ENCODE measurements at regions of chr14 and their contacts with region 1.

Region 1: DNA sequence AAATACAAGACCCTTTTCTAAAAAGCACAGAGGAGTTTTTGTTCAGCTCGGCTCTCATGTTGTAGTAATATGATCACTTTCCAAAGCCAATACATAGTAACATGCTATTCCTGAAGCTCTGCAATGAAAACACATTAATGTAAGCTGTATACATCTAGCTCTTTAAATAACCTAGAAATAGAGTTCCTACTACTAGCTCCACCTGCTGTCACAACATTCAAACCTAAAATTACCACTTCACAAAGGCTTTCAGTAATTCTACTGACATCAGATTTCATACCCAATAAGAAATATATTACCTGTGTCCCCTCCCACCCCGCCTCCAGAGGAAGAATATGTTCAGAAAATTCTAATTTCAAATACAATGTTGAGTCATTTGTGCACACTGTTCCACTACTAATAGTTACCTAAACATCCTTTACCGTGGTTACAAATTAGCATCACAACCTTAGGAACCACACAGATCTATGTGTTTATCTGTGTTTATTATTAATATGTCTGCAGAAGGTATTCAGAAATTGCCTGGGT is 17.8 kb downstream of the EFCAB11 start:
- DNase-seq: no peak
- H3K4me3 Mint-ChIP-seq: no peak overlapping the region
- H3K27ac Mint-ChIP-seq: no peak overlapping the region
- H3K4me1 Mint-ChIP-seq: peaks cover 6% of the 10 kb centered on the region
- H3K27me3 Mint-ChIP-seq: no peaks in the 10 kb centered on the region

Region 2: GRCh38 chr14:89922031-89922907 is 14.5 kb before region 1 on chr14:
- CTCF ChIA-PET with region 1: interaction called, 10 read pairs
- POLR2A ChIA-PET with region 1: no interaction called
- intact Hi-C with region 1: no loop called
- DNase-seq: no peak
- H3K4me3 Mint-ChIP-seq: no peak overlapping the region
- H3K27ac Mint-ChIP-seq: no peak overlapping the region
- H3K4me1 Mint-ChIP-seq: no peaks in the 10 kb centered on the region
- H3K27me3 Mint-ChIP-seq: no peaks in the 10 kb centered on the region

Region 3: DNA sequence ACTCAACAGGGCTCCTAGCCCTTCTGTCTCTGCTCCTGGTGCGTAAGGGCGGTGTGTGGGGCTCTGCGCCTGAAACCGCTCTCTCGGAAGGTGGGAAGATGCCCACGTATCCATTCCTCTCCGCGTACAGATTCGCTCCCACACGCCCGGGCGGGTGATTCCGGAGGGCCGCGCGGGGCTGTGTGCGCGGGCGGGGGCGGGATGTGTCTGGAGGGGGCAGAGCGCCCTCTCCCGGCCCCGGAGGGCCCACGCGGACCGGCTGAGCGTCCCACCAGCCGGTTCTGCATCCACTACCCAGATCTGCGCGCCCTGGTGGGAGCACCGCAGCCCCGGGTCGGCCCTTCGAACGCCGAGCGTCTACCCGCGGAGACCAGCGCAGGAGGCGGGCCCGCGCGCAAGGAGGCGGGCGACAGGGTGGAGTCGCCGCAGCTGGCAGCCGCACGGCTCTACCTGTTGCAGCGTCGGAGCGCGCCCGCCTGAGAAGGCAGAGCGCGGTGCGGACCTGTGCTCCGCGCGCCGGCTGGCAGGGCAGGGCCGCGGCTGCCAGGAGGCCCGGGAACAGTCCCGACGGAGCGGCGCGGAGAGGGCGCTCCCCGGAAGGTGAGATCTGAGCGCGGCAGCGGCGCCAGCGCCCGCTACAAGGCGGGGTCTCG is 123.7 kb after region 1 on chr14:
- CTCF ChIA-PET with region 1: interaction called, 7 read pairs
- POLR2A ChIA-PET with region 1: no interaction called
- intact Hi-C with region 1: loop called (anchors 1 kb)
- DNase-seq: peak; percentile 68
- H3K4me3 Mint-ChIP-seq: peak overlapping the region; percentile 53
- H3K27ac Mint-ChIP-seq: no peak overlapping the region
- H3K4me1 Mint-ChIP-seq: peaks cover 19% of the 10 kb centered on the region
- H3K27me3 Mint-ChIP-seq: peaks cover 57% of the 10 kb centered on the region